Endothelial cell of umbilical vein (primary cell): ENCODE measurements at regions of chr10 and their contacts with region 1.

Region 1: DNA sequence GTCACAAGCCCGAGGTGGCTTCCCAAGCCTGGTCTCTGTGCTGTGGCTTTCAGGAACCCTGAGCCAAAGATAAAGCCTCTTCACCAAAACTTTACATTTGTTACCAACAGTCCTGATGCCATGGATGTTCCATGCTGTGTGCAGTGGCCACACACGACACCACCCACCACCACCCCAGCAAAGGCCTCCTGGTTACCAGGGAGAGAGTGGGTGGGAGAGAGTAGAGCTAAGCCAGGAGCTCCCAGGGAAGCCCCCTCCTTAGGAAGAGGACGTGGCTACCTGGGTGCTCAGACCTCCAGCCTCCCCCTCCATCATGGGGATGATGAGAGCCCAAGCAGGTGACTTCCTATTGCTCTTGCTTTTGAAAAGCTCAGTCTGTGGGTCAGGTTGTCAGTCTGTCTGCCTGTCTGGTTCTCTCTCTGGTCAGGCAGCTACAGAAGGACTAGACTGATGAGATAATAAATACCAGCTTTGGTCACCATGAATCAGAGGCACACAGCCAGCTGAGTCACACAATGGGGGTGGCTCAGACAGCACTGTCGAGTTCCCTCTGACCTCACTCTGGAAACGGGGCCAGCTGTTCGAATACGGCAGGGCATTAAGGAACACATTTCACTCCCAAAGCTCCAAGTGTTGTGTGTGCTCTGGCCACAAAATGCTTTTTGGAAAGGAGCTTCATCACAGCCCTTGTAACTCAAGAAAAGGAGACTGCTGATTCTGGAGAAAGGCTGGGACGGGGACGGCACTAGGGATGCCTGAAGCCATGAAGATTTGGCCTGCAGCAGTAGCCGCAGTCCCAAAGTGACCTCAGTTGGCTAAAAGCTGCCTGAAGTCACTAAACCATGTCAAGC is 166.0 kb downstream of the FANK1 start:
- DNase-seq: peak; percentile 97
- H3K4me3 ChIP-seq: no peak overlapping the region
- H3K27ac ChIP-seq: peak overlapping the region; percentile 97
- H3K4me1 ChIP-seq: peaks cover 50% of the 10 kb centered on the region
- H3K27me3 ChIP-seq: no peaks in the 10 kb centered on the region
- CTCF ChIP-seq: no peak
- POLR2A ChIP-seq: peak; percentile 37

Region 2: GRCh38 chr10:126013489-126014281 is 48.7 kb before region 1 on chr10:
- CTCF ChIA-PET with region 1: no interaction called
- POLR2A ChIA-PET with region 1: no interaction called
- dilution Hi-C with region 1: no loop called
- intact Hi-C with region 1: loop called (anchors 2 kb)
- DNase-seq: peak; percentile 54
- H3K4me3 ChIP-seq: no peak overlapping the region
- H3K27ac ChIP-seq: no peak overlapping the region
- H3K4me1 ChIP-seq: peaks cover 11% of the 10 kb centered on the region
- H3K27me3 ChIP-seq: no peaks in the 10 kb centered on the region
- CTCF ChIP-seq: no peak
- POLR2A ChIP-seq: no peak

Region 3: GRCh38 chr10:126041781-126042231 is 20.6 kb before region 1 on chr10:
- CTCF ChIA-PET with region 1: interaction called, 3 read pairs
- POLR2A ChIA-PET with region 1: no interaction called
- dilution Hi-C with region 1: no loop called
- intact Hi-C with region 1: loop called (anchors 1 kb)
- DNase-seq: peak; percentile 98
- H3K4me3 ChIP-seq: no peak overlapping the region
- H3K27ac ChIP-seq: peak overlapping the region; percentile 76
- H3K4me1 ChIP-seq: peaks cover 14% of the 10 kb centered on the region
- H3K27me3 ChIP-seq: no peaks in the 10 kb centered on the region
- CTCF ChIP-seq: no peak
- POLR2A ChIP-seq: no peak

Region 4: DNA sequence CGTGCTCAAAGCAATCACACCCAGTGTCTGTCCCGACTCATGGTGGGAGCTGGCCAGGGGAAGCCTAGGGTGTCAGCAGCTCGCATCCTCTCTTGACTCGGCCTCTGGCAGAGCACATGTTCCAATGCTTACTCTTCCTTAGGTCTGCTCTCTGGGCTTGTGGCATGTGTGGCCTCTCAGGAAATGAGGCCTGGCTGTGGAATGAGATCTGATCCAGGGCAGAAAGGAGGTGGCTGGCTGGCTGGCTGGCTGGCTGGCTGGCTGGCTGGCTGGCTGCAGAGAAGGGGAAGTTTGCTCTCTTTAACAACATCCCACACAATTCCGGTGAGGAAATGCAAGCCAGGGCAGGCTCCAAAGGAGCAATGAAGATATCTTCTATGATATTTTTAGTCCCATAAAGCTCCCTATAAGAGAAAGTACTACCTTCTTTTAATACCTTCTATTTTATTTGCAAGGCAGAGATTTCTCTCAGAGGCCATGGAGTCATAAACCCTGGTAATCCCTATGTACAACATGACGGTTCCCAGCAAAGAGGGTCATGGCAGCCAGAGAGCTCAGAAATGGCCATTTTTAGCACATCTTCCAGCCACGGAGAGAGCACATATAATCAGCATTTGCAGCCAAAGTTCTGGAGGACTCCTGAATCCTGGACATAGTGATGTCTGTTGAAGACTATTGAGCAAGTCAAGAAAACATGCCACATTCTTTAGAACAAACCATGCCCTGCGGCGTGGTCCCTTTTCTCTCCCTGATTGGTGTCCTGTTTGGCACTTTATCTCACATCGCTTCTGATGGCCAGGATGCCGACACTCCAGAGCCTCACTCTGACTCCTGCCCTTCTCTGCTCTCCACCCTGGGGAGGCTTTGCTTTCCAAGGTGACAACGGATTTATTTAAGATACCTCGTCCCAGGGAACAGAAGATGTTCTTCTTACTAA is 12.3 kb before region 1 on chr10:
- CTCF ChIA-PET with region 1: interaction called, 11 read pairs
- POLR2A ChIA-PET with region 1: interaction called, 7 read pairs
- dilution Hi-C with region 1: no loop called
- intact Hi-C with region 1: loop called (anchors 1 kb)
- DNase-seq: peak; percentile 96
- H3K4me3 ChIP-seq: no peak overlapping the region
- H3K27ac ChIP-seq: peak overlapping the region; percentile 78
- H3K4me1 ChIP-seq: peaks cover 22% of the 10 kb centered on the region
- H3K27me3 ChIP-seq: no peaks in the 10 kb centered on the region
- CTCF ChIP-seq: no peak
- POLR2A ChIP-seq: no peak

Region 5: GRCh38 chr10:126080879-126081411 is 18.6 kb after region 1 on chr10:
- CTCF ChIA-PET with region 1: interaction called, 5 read pairs
- POLR2A ChIA-PET with region 1: no interaction called
- dilution Hi-C with region 1: no loop called
- intact Hi-C with region 1: loop called (anchors 1 kb)
- DNase-seq: peak; percentile 83
- H3K4me3 ChIP-seq: no peak overlapping the region
- H3K27ac ChIP-seq: no peak overlapping the region
- H3K4me1 ChIP-seq: no peaks in the 10 kb centered on the region
- H3K27me3 ChIP-seq: no peaks in the 10 kb centered on the region
- CTCF ChIP-seq: no peak
- POLR2A ChIP-seq: no peak

Region 6: GRCh38 chr10:126097558-126098225 is 35.3 kb after region 1 on chr10:
- CTCF ChIA-PET with region 1: interaction called, 6 read pairs
- POLR2A ChIA-PET with region 1: no interaction called
- dilution Hi-C with region 1: no loop called
- intact Hi-C with region 1: loop called (anchors 1 kb)
- DNase-seq: no peak
- H3K4me3 ChIP-seq: no peak overlapping the region
- H3K27ac ChIP-seq: no peak overlapping the region
- H3K4me1 ChIP-seq: peaks cover 8% of the 10 kb centered on the region
- H3K27me3 ChIP-seq: peaks cover 0 to 2% of the 10 kb centered on the region in 2 experiments
- CTCF ChIP-seq: peak; percentile 20 to 38
- POLR2A ChIP-seq: no peak

Region 7: DNA sequence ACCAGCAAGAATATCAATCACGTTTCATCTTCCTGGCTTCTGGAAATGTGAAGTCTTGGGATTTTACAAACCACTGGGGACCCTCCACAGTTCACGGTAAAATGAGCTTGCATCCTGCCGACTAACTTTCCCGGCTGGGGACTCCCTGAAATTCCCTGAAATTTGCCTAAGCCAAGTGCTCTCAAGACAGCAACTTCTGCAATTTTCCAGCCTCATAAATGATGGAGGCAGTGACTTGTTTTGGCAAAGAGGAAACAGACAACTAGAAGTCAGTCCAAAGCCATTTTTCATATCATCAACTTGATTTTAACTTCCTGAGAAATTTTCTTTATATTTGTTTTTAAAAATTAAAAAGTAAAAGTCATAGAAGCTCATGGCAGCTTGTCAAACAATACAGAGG is 46.3 kb after region 1 on chr10:
- CTCF ChIA-PET with region 1: no interaction called
- POLR2A ChIA-PET with region 1: no interaction called
- dilution Hi-C with region 1: no loop called
- intact Hi-C with region 1: no loop called
- DNase-seq: no peak
- H3K4me3 ChIP-seq: no peak overlapping the region
- H3K27ac ChIP-seq: no peak overlapping the region
- H3K4me1 ChIP-seq: no peaks in the 10 kb centered on the region
- H3K27me3 ChIP-seq: no peaks in the 10 kb centered on the region
- CTCF ChIP-seq: no peak
- POLR2A ChIP-seq: no peak

Region 8: GRCh38 chr10:126904819-126905686 is 842.7 kb after region 1 on chr10 and contains the start of gene DOCK1:
- CTCF ChIA-PET with region 1: no interaction called
- POLR2A ChIA-PET with region 1: no interaction called
- dilution Hi-C with region 1: no loop called
- intact Hi-C with region 1: loop called (anchors 10 kb)
- DNase-seq: peak; percentile 69
- H3K4me3 ChIP-seq: peak within 1 kb of the TSS; percentile 71 to 83 (median 78)
- H3K27ac ChIP-seq: peak within 1 kb of the TSS; percentile 74
- H3K4me1 ChIP-seq: peaks cover 8% of the 10 kb centered on the region
- H3K27me3 ChIP-seq: no peaks in the 10 kb centered on the region
- CTCF ChIP-seq: no peak
- POLR2A ChIP-seq: peak; percentile 24
- total RNA-seq, gene DOCK1: 78.7 and 83.1 TPM in 2 replicates